ENCODE measurements at regions of chr5 and their contacts with region 1.

Region 1: GRCh38 chr5:1641560-1642166 is 117.9 kb upstream of the LPCAT1 start:
- DNase-seq: peak; percentile 49 to 89
- H3K4me3 ChIP-seq: no peak overlapping the region
- H3K27ac ChIP-seq: no peak overlapping the region
- H3K4me1 ChIP-seq: peaks cover 0 to 5% of the 10 kb centered on the region in 2 donors
- H3K27me3 ChIP-seq: peaks cover 5% of the 10 kb centered on the region
- CTCF ChIP-seq: peak; percentile 68 to 85 (median 79)

Region 2: DNA sequence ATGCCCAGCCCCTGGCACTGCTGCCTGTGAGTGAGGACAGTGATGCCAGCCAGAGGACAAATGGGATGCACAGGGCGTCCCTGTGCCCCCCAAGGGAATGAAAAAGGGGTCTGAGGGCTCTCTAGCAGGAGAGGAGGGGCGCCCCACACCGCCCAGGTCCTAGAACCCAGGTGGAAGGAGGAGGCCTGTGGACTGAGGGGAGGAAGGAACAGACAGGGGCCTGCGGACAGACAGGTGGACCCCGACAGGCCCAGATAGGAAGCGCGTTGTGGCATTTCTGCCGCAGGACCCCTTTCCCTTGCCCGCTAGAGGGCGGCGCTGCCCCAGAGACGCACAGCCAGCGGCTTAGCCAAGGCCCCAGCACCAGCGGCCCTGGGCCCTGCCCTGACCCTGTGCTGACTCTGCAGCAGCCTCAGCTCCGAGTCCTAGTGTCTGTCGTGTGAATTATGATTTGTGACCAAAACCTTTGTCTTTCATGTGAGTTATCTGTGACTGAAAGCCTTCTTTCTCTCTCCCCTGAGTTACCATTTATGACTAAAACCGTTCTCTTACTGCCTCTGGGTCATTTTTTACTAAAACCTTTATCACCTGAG is 718.3 kb before region 1 on chr5:
- intact Hi-C with region 1: loop called (anchors 10 kb)
- DNase-seq: peak in 1 of 2 donors; percentile 72
- H3K4me3 ChIP-seq: no peak overlapping the region
- H3K27ac ChIP-seq: no peak overlapping the region
- H3K4me1 ChIP-seq: peaks cover 0 to 4% of the 10 kb centered on the region in 2 donors
- H3K27me3 ChIP-seq: peaks cover 10% of the 10 kb centered on the region
- CTCF ChIP-seq: peak; percentile 28 to 65 (median 51)

Region 3: DNA sequence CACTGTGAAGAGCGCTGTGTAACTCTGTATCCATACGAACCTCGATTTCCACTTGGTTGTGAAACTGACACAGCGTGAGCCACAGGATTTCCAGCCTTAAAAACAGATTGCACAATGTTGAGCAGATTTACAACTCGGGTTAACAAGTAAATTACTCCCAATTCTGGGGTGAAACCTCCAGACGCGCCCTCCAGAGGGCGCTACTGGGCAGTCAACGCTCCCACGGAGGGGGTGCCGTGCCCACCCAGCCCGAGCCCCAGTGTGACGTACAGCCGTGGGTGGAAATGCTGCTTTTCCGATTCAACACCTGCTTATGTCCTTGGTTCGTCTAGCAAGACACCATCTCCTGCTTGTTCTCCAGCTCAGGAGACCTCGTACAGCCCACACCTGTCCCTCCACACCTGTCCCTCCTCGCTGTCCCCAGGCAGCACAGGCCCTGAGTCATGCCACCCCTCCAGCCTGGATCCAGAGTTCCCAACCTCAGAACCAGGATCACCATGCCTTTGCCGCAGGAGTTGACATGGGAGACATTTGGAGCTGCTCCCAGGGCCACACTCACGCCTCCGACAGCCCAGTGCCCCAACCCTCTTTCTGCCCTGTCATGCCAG is 162.0 kb before region 1 on chr5:
- intact Hi-C with region 1: loop called (anchors 2 kb)
- DNase-seq: no peak
- H3K4me3 ChIP-seq: no peak overlapping the region
- H3K27ac ChIP-seq: peak overlapping the region in 1 of 2 donors; percentile 41
- H3K4me1 ChIP-seq: no peaks in the 10 kb centered on the region
- H3K27me3 ChIP-seq: no peaks in the 10 kb centered on the region
- CTCF ChIP-seq: peak; percentile 53 to 67 (median 64)

Region 4: GRCh38 chr5:1799602-1800471 is 158.2 kb after region 1 on chr5 and contains the start of gene MRPL36:
- intact Hi-C with region 1: loop called (anchors 10 kb)
- DNase-seq: peak; percentile 64 to 93
- H3K4me3 ChIP-seq: peak within 1 kb of the TSS; percentile 80 to 97
- H3K27ac ChIP-seq: peak within 1 kb of the TSS; percentile 63 to 80
- H3K4me1 ChIP-seq: peaks cover 4 to 14% of the 10 kb centered on the region in 2 donors
- H3K27me3 ChIP-seq: no peaks in the 10 kb centered on the region
- CTCF ChIP-seq: no peak
- total RNA-seq, gene MRPL36: 21.4 TPM

Measured in ascending aorta (tissue), 2 donors.